Prostate gland (tissue), 2 donors: ENCODE measurements at regions of chr6 and their contacts with region 1.

Region 1: DNA sequence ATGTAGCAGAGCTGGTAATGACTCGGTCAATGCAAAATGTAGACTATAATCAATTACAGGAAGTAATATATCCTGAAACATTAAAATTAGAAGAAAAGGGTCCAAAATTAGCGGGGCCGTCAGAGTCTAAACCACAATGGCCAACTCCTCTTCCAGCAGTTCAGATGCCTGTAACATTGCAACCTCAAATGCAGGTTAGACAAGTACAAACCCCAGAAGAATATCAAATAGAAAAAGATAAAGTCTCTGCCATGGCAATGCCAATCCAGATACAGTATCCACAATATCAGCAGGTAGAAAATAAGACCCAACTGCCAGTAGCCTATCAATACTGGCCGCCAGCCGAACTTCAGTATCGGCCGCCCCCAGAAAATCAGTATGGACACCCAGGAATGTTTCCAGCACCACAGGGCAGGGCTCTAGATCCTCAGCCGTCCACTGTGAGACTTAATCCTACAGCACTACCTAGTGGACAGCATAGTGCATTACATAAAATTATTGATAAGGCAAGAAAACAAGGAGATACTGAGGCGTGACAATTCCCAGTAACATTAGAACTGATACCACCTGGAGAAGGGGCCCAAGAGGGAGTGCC is 158.4 kb downstream of the GPX5 start:
- DNase-seq: peak; percentile 27
- H3K4me3 ChIP-seq: peak overlapping the region; percentile 22 to 25
- H3K27ac ChIP-seq: peak overlapping the region; percentile 65 to 74
- H3K4me1 ChIP-seq: no peaks in the 10 kb centered on the region
- H3K27me3 ChIP-seq: no peaks in the 10 kb centered on the region
- CTCF ChIP-seq: peak in 3 of 4 experiments; percentile 53 to 68 (median 65)
- POLR2A ChIP-seq: no peak

Region 2: GRCh38 chr6:28296520-28297060 is 387.5 kb before region 1 on chr6:
- intact Hi-C with region 1: no loop called
- DNase-seq: no peak
- H3K4me3 ChIP-seq: no peak overlapping the region
- H3K27ac ChIP-seq: no peak overlapping the region
- H3K4me1 ChIP-seq: no peaks in the 10 kb centered on the region
- H3K27me3 ChIP-seq: no peaks in the 10 kb centered on the region
- CTCF ChIP-seq: no peak
- POLR2A ChIP-seq: no peak

Region 3: DNA sequence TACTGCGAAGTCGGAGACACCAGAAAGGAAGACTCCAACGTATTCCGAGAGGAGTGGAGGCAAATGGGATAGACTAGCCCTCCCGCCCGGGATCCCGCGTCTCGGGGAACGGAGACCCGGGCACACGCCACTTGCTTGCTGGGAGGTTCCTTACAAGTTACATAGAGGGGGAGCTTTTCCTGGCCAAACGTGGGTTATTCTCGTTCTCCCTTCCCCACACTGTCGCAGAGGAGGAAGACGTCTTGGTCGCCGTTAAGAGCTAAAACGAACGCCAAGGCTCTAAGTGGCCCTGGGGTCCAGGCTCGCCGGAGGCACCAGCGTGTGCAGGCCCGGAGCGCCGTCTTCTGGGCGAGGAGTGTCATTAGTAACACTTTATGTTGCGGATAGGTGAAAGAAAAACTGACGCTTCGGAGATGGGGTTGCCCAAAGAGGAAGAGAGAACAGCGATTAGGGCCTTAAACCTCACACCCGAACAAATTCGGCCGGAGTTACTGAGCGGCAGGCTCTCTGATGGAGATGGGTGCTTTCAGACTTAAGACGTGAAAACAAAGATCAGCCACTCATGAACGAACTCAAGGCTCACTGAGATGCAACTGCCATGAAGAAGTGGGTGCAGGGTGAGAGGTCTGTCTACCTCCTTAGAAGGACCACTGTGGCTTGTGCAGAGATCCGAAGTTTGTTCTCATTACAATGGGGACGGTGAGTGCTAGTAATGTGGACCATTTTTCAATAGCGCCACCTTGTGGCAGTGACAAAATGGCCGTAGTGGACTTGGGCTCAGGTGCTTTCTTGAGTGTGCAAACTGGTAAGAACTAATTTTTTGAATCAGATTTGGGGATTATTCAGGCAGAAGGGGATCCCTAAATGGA is 332.8 kb after region 1 on chr6:
- intact Hi-C with region 1: loop called (anchors 5 kb)
- DNase-seq: peak; percentile 86
- H3K4me3 ChIP-seq: peak overlapping the region; percentile 31 to 47
- H3K27ac ChIP-seq: peak overlapping the region; percentile 37 to 54
- H3K4me1 ChIP-seq: no peaks in the 10 kb centered on the region
- H3K27me3 ChIP-seq: no peaks in the 10 kb centered on the region
- CTCF ChIP-seq: peak; percentile 71 to 87 (median 80)
- POLR2A ChIP-seq: no peak

Region 4: DNA sequence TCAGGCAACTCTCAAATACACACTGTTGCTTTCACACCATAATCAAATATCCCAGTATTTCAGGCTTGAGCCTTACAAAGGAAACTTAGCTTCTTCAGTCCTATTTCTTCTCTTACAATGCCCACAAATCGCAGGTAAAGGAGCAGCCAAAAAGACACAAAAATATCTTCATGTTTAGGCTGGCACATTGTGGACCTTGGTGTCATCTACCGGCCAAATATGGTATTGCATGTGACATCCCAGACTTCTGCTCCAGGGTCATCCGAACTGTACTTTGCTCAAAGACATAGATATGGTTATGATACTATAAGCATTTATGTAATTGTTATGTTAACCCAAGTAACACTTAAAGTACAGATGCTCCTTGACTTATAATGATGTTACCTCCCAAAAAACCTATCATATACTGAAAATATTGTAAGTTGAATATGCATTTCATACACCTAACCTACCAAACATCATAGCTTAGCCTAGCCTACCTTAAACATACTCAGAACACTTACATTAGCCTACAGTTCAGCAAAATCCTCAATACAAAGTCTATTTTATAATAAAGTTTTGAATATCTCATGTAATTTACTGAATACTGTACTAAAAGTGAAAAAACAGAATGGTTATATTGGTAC is 905.5 kb after region 1 on chr6:
- intact Hi-C with region 1: loop called (anchors 10 kb)
- DNase-seq: peak; percentile 40
- H3K4me3 ChIP-seq: no peak overlapping the region
- H3K27ac ChIP-seq: no peak overlapping the region
- H3K4me1 ChIP-seq: no peaks in the 10 kb centered on the region
- H3K27me3 ChIP-seq: no peaks in the 10 kb centered on the region
- CTCF ChIP-seq: peak; percentile 83 to 96 (median 90)
- POLR2A ChIP-seq: no peak